ENCODE measurements at regions of chr21 and their contacts with region 1.

Region 1: GRCh38 chr21:43691086-43691795 is 27.7 kb upstream of the PDXK start:
- DNase-seq: no peak

Region 2: GRCh38 chr21:43659136-43660000 is 31.9 kb before region 1 on chr21 and contains the starts of genes HSF2BP and RRP1B:
- intact Hi-C with region 1: no loop called
- DNase-seq: peak; percentile 86
- total RNA-seq, gene HSF2BP: not detected
- total RNA-seq, gene RRP1B: 8.7 TPM

Region 3: DNA sequence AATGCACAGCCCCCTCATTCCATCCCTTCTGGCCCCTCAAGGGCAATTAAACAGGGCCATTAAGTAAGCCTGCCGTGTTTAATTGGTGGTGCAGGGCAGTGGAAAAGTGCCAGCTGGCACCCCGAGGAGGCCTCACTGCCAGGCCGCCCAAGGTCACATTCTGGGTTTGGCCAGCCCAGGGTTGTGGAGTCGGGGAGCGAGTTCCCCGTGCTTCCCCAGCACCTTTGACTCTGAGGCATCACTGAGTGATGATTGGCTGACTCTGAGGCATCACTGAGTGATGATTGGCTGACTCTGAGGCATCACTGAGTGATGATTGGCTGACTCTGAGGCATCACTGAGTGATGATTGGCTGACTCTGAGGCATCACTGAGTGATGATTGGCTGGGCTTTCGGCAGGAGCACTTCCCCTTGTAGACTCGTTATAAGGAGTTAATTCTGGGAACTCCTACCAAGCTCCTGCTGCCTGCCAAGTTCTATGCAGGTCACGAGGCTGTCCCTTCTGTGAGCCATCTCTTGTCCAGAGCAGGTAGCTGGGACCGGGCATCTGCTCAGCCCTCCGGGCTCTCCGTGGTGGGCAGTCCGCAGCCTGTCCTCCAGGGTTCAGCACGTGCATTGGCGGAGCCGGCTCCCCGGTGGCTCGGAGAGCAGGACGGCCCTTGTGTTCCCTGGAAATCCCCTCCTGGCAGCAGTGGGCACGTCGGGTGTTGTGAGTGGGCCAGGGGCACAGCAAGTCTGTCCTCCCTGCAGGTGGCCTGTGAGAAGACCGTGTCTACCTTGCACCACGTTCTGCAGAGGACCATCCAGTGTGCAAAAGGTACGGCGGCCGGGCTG is 63.9 kb after region 1 on chr21:
- intact Hi-C with region 1: loop called (anchors 5 kb)
- DNase-seq: no peak